AG04450 (cell line): ENCODE measurements at regions of chr13 and their contacts with region 1.

Region 1: GRCh38 chr13:40777166-40777808 is 6.3 kb upstream of the MRPS31 start:
- DNase-seq: no peak
- H3K4me3 ChIP-seq: no peak overlapping the region
- H3K27ac ChIP-seq: no peak overlapping the region
- H3K27me3 ChIP-seq: no peaks in the 10 kb centered on the region
- CTCF ChIP-seq: peak; percentile 53

Region 2: DNA sequence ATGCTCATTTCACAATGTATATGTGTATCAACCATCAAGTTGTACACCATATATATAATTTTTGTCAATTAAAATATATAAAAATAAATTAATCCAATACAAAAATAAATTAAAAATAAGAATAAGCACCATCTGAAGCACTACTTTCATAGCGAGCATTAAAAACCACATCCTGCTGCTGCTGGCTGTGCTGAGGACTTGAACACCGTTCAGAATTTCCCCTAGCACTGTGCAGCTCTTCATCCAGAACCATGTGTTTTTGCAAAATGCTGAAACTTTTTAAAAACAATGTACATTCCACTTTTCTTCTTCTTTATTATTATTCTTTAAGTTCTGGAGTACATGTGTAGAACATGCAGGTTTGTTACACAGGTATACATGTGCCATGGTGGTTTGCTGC is 70.8 kb before region 1 on chr13:
- CTCF ChIA-PET with region 1: no interaction called
- POLR2A ChIA-PET with region 1: no interaction called
- DNase-seq: no peak
- H3K4me3 ChIP-seq: no peak overlapping the region
- H3K27ac ChIP-seq: no peak overlapping the region
- H3K27me3 ChIP-seq: no peaks in the 10 kb centered on the region
- CTCF ChIP-seq: no peak

Region 3: DNA sequence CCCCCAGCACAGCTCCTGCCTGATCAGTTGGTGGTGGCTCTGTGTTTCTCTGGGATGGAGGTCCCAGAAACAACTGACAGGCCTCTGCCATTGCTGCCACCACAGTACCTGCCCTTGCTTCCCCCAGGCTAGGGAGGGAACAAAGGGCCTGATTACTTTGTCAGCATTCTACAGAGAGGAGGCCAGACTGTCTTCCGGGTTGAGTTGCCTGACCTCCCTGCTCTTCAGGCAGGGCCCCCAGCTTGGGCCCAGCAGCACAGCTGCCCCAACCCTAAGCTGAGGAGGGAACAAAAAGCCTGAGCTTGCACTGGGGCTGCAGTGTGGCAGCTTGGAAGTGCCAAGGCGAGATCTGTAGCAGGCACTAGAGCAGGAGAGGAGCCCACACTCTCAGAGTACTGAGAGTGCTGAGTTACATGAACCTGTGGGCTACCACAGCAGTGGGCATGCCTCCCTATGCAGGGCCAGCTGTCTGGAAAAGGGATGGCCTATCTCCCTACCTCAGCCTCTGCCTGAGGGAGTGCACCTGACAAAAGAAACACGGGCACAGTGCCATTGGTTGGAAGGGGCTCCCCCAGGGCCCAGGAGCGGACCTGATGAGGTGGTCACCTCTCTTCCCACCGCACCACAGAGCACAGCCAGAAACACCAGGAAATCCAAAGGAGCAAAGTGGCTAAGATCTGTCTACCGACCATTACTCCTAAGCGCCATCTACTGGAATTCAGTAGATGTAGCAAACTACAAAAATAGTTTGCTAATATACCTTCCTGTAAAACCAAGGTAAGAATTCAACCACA is 36.6 kb after region 1 on chr13:
- CTCF ChIA-PET with region 1: interaction called, 13 read pairs
- POLR2A ChIA-PET with region 1: no interaction called
- DNase-seq: no peak
- H3K4me3 ChIP-seq: no peak overlapping the region
- H3K27ac ChIP-seq: no peak overlapping the region
- H3K27me3 ChIP-seq: no peaks in the 10 kb centered on the region
- CTCF ChIP-seq: peak; percentile 52